ENCODE measurements at regions of chr16 and their contacts with region 1.

Region 1: DNA sequence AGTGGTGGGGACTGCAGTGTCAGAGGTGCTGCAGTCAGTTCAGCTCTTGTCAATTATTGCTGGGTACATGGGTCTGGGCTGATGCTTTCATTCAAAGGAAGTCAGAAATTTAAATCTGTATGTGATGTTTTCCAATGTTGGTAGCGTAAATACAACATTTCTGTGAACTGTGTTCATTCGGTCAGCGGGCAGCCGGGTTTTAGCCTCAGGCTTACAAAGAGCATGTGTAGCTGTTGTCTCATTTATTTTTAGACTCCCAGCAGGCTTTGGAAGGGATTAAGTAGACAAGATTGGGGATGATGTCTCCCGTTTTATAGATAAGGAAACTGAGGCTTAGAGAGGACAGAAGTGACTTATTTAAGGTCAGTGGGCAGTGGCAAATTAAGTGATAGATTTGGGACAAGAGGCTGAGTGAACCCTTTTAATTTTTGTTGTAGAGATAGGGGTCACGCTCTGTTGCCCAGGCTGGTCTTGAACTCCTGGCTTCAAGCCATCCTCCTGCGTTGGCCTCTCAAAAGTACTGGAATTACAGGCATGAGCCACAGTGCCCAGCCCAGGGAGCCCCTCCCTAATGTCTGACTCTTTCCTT is 8.1 kb downstream of the AQP8 start:
- DNase-seq: no peak
- ATAC-seq: no peak
- H3K4me3 Mint-ChIP-seq: no peak overlapping the region
- H3K27ac Mint-ChIP-seq: no peak overlapping the region
- H3K4me1 Mint-ChIP-seq: peaks cover 2% of the 10 kb centered on the region
- H3K27me3 Mint-ChIP-seq: no peaks in the 10 kb centered on the region

Region 2: GRCh38 chr16:25093208-25094061 is 131.4 kb before region 1 on chr16:
- CTCF ChIA-PET with region 1: no interaction called
- POLR2A ChIA-PET with region 1: no interaction called
- DNase-seq: peak; percentile 25
- ATAC-seq: peak; percentile 70
- H3K4me3 Mint-ChIP-seq: peak overlapping the region; percentile 6
- H3K27ac Mint-ChIP-seq: peak overlapping the region; percentile 83
- H3K4me1 Mint-ChIP-seq: peaks cover 22% of the 10 kb centered on the region
- H3K27me3 Mint-ChIP-seq: no peaks in the 10 kb centered on the region

Region 3: GRCh38 chr16:25126820-25127232 is 98.0 kb before region 1 on chr16:
- CTCF ChIA-PET with region 1: interaction called, 43 read pairs
- POLR2A ChIA-PET with region 1: no interaction called
- DNase-seq: peak; percentile 46
- ATAC-seq: peak; percentile 73
- H3K4me3 Mint-ChIP-seq: no peak overlapping the region
- H3K27ac Mint-ChIP-seq: peak overlapping the region; percentile 26
- H3K4me1 Mint-ChIP-seq: peaks cover 29% of the 10 kb centered on the region
- H3K27me3 Mint-ChIP-seq: no peaks in the 10 kb centered on the region

Region 4: GRCh38 chr16:25235991-25236390 is 11.2 kb after region 1 on chr16:
- CTCF ChIA-PET with region 1: interaction called, 15 read pairs
- POLR2A ChIA-PET with region 1: no interaction called
- DNase-seq: no peak
- ATAC-seq: no peak
- H3K4me3 Mint-ChIP-seq: no peak overlapping the region
- H3K27ac Mint-ChIP-seq: no peak overlapping the region
- H3K4me1 Mint-ChIP-seq: no peaks in the 10 kb centered on the region
- H3K27me3 Mint-ChIP-seq: peaks cover 2% of the 10 kb centered on the region

Region 5: DNA sequence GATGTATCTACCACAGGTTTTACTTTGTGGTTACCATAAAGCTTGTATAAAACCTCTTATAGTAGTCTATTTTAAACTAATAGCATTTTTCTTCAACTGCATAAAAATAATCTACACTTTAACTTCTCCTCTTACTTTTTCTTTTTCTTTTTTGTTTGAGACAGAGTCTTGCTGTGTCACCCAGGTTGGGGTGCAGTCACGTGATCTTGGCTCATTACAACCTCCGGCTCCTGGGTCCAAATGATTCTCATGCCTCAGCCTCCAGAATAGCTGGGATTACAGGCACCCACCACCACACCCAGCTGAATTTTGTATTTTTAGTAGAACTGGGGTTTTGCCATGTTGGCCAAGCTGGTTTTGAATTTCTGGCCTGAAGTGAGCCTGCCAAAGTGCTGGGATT is 86.2 kb after region 1 on chr16:
- CTCF ChIA-PET with region 1: no interaction called
- POLR2A ChIA-PET with region 1: no interaction called
- DNase-seq: no peak
- ATAC-seq: no peak
- H3K4me3 Mint-ChIP-seq: no peak overlapping the region
- H3K27ac Mint-ChIP-seq: no peak overlapping the region
- H3K4me1 Mint-ChIP-seq: no peaks in the 10 kb centered on the region
- H3K27me3 Mint-ChIP-seq: peaks cover 2% of the 10 kb centered on the region

Region 6: GRCh38 chr16:25419681-25420080 is 194.9 kb after region 1 on chr16:
- CTCF ChIA-PET with region 1: no interaction called
- POLR2A ChIA-PET with region 1: no interaction called
- DNase-seq: no peak
- ATAC-seq: no peak
- H3K4me3 Mint-ChIP-seq: no peak overlapping the region
- H3K27ac Mint-ChIP-seq: no peak overlapping the region
- H3K4me1 Mint-ChIP-seq: no peaks in the 10 kb centered on the region
- H3K27me3 Mint-ChIP-seq: no peaks in the 10 kb centered on the region

Measured in activated CD8-positive, alpha-beta T cell treated with anti-CD3 and anti-CD28 coated beads, Interleukin-2, amount 10 ng/mL, durations not matched to agents 7 days and 5 days (primary cell).